CD8-positive, alpha-beta T cell (primary cell): ENCODE measurements at regions of chr11 and their contacts with region 1.

Region 1: GRCh38 chr11:62427630-62428233 is 8.9 kb downstream of the SCGB1A1 start:
- DNase-seq: no peak
- ATAC-seq: no peak
- H3K4me3 ChIP-seq: no peak overlapping the region
- H3K4me3 Mint-ChIP-seq: no peak overlapping the region
- H3K27ac ChIP-seq: no peak overlapping the region
- H3K27ac Mint-ChIP-seq: peak overlapping the region; percentile 82
- H3K4me1 ChIP-seq: peaks cover 37% of the 10 kb centered on the region
- H3K4me1 Mint-ChIP-seq: peaks cover 44% of the 10 kb centered on the region
- H3K27me3 ChIP-seq: no peaks in the 10 kb centered on the region
- H3K27me3 Mint-ChIP-seq: no peaks in the 10 kb centered on the region
- CTCF ChIP-seq: no peak

Region 2: GRCh38 chr11:62306227-62306626 is 121.5 kb before region 1 on chr11:
- CTCF ChIA-PET with region 1: no interaction called
- POLR2A ChIA-PET with region 1: no interaction called
- intact Hi-C with region 1: no loop called
- DNase-seq: no peak
- ATAC-seq: no peak
- H3K4me3 ChIP-seq: no peak overlapping the region
- H3K4me3 Mint-ChIP-seq: no peak overlapping the region
- H3K27ac ChIP-seq: no peak overlapping the region
- H3K27ac Mint-ChIP-seq: no peak overlapping the region
- H3K4me1 ChIP-seq: no peaks in the 10 kb centered on the region
- H3K4me1 Mint-ChIP-seq: peaks cover 2% of the 10 kb centered on the region
- H3K27me3 ChIP-seq: no peaks in the 10 kb centered on the region
- H3K27me3 Mint-ChIP-seq: peaks cover 23% of the 10 kb centered on the region
- CTCF ChIP-seq: no peak

Region 3: GRCh38 chr11:62400760-62401159 is 27.0 kb before region 1 on chr11:
- CTCF ChIA-PET with region 1: interaction called, 66 read pairs
- POLR2A ChIA-PET with region 1: interaction called, 3 read pairs
- intact Hi-C with region 1: no loop called
- DNase-seq: no peak
- ATAC-seq: no peak
- H3K4me3 ChIP-seq: no peak overlapping the region
- H3K4me3 Mint-ChIP-seq: peak overlapping the region; percentile 8
- H3K27ac ChIP-seq: peak overlapping the region in 1 of 2 experiments; percentile 50
- H3K27ac Mint-ChIP-seq: peak overlapping the region; percentile 45
- H3K4me1 ChIP-seq: peaks cover 52% of the 10 kb centered on the region
- H3K4me1 Mint-ChIP-seq: peaks cover 51% of the 10 kb centered on the region
- H3K27me3 ChIP-seq: no peaks in the 10 kb centered on the region
- H3K27me3 Mint-ChIP-seq: no peaks in the 10 kb centered on the region
- CTCF ChIP-seq: no peak

Region 4: DNA sequence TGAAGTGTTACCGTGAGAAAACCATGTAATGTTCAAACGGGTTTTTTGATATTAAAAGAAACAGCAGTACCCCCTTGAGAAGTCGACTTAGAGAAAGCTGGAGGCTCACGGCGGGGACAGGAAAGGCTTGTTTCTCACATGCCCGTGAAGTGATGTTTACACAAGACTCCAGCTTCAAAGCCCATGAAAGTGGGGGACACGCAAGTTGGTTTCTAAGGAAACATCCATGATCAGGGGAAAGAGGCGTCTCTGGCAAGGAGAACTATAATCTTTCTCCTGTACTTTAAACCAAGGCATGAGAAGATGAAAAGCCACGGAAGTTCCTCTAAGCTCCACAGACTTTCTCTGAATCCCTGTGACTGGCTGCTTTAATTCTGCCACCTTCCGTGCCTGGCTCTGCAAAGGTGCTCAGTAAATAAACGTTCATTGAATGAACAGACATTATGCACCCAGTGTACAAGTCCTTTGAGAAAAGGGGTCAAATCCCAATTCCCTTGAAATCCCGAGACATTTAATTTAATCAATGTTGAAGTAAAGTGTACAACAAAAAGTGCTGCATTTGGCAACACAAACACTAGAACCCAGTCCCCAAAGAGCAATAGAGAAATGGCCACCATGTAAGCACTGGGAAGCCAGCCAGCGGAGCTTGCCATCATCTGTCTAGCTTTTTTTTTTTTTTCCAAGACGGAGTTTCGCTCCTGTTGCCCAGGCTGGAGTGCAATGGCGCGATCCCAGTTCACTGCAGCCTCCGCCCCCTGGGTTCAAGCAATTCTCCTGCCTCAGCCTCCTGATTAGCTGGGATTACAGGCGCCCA is 60.2 kb after region 1 on chr11:
- CTCF ChIA-PET with region 1: interaction called, 5 read pairs
- POLR2A ChIA-PET with region 1: no interaction called
- intact Hi-C with region 1: loop called in 1 of 2 experiments (anchors 10 kb)
- DNase-seq: no peak
- ATAC-seq: no peak
- H3K4me3 ChIP-seq: no peak overlapping the region
- H3K4me3 Mint-ChIP-seq: no peak overlapping the region
- H3K27ac ChIP-seq: no peak overlapping the region
- H3K27ac Mint-ChIP-seq: peak overlapping the region; percentile 49
- H3K4me1 ChIP-seq: no peaks in the 10 kb centered on the region
- H3K4me1 Mint-ChIP-seq: peaks cover 7% of the 10 kb centered on the region
- H3K27me3 ChIP-seq: no peaks in the 10 kb centered on the region
- H3K27me3 Mint-ChIP-seq: peaks cover 2% of the 10 kb centered on the region
- CTCF ChIP-seq: no peak

Region 5: DNA sequence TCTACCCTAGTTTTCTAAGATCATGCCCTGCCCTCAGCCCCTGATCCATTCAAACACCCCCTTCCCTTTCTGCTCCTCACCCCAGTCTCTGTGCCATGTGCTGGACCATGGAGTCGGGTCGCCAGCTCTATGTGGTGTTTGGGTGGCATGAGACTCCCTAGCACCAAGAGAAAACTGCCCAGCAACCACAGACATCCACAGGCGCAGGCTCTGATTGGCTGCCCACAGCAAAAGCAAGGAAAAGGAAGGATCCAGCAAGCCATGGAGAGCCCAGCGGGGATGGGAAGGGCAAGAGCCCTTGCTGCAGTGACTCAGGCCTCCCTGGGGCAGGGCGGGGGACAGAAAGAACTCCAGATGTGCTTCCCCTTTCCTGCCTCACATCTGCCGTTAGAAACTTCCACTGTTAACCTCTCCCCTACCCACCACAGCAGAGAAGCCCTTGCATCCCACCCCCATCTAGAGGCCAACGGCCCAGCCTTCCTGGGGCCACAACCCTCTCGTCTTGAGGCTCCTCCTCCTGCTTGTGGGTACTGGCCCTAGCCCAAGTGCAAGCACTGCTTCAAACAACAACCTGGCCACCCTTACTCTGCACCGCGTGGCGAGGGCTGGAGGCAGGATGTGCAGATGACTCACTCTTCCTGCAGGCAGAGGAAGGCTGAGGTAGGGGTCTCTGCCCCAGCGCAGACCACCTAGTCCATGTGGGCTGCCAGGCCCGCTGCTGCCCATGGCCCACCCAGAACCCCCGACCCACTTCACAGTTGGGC is 128.6 kb after region 1 on chr11:
- CTCF ChIA-PET with region 1: interaction called, 177 read pairs
- POLR2A ChIA-PET with region 1: interaction called, 15 read pairs
- intact Hi-C with region 1: loop called (anchors 1 kb)
- DNase-seq: peak; percentile 72 to 96 (median 90)
- ATAC-seq: peak; percentile 52
- H3K4me3 ChIP-seq: peak overlapping the region; percentile 14 to 28
- H3K4me3 Mint-ChIP-seq: peak overlapping the region; percentile 77
- H3K27ac ChIP-seq: peak overlapping the region; percentile 86 to 92
- H3K27ac Mint-ChIP-seq: peak overlapping the region; percentile 97
- H3K4me1 ChIP-seq: peaks cover 87% of the 10 kb centered on the region
- H3K4me1 Mint-ChIP-seq: peaks cover 86% of the 10 kb centered on the region
- H3K27me3 ChIP-seq: no peaks in the 10 kb centered on the region
- H3K27me3 Mint-ChIP-seq: no peaks in the 10 kb centered on the region
- CTCF ChIP-seq: no peak

Region 6: GRCh38 chr11:62860835-62861563 is 433.3 kb after region 1 on chr11:
- CTCF ChIA-PET with region 1: no interaction called
- POLR2A ChIA-PET with region 1: no interaction called
- intact Hi-C with region 1: loop called (anchors 1 to 2 kb)
- DNase-seq: no peak
- ATAC-seq: no peak
- H3K4me3 ChIP-seq: no peak overlapping the region
- H3K4me3 Mint-ChIP-seq: no peak overlapping the region
- H3K27ac ChIP-seq: no peak overlapping the region
- H3K27ac Mint-ChIP-seq: no peak overlapping the region
- H3K4me1 ChIP-seq: peaks cover 6% of the 10 kb centered on the region
- H3K4me1 Mint-ChIP-seq: peaks cover 21% of the 10 kb centered on the region
- H3K27me3 ChIP-seq: no peaks in the 10 kb centered on the region
- H3K27me3 Mint-ChIP-seq: no peaks in the 10 kb centered on the region
- CTCF ChIP-seq: no peak